AG04450 (cell line): ENCODE measurements at regions of chr4 and their contacts with region 1.

Region 1: DNA sequence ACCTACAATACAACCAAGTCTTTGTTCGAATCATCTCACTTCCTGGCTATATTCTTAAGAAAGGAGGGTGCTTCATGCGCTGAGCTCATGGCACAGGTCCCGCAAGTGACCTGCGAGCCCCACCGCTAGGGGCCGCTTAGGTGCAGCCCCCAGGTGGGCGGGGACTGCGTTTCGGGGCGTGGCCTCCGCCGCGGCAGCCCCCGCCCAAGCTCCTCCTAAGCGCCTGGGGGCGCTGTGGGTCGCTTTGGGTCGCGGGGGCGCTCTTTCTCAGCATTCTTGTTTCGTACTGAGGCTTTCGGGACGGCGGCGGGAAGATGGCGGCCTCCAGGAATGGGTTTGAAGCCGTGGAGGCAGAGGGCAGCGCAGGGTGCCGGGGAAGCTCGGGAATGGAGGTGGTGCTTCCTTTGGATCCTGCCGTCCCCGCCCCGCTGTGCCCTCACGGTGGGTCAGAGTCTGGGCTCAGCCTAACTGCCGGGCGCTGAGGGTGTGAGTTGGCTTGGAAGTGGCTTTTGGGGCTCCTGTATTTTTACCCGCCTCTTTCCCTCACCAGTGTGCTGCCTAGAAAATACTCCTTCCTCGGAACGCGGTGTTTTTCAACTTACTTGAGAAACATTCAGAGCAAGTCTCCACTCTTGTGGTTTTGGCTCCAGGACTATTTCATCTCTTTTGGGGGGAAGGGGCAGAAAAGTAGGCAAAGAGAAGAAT is at the start of gene ZCCHC4:
- DNase-seq: peak; percentile 82
- H3K4me3 ChIP-seq: peak within 1 kb of the TSS; percentile 92
- H3K27ac ChIP-seq: peak within 1 kb of the TSS; percentile 82
- H3K27me3 ChIP-seq: no peaks in the 10 kb centered on the region
- CTCF ChIP-seq: peak; percentile 99
- polyA plus RNA-seq, gene ZCCHC4: 11.4 and 13.1 TPM in 2 replicates

Region 2: GRCh38 chr4:24363751-24364150 is 948.9 kb before region 1 on chr4:
- CTCF ChIA-PET with region 1: no interaction called
- POLR2A ChIA-PET with region 1: no interaction called
- DNase-seq: no peak
- H3K4me3 ChIP-seq: no peak overlapping the region
- H3K27ac ChIP-seq: no peak overlapping the region
- H3K27me3 ChIP-seq: peaks cover 3% of the 10 kb centered on the region
- CTCF ChIP-seq: no peak

Region 3: GRCh38 chr4:25154594-25155265 is 157.9 kb before region 1 on chr4:
- CTCF ChIA-PET with region 1: interaction called, 30 read pairs
- POLR2A ChIA-PET with region 1: no interaction called
- DNase-seq: no peak
- H3K4me3 ChIP-seq: no peak overlapping the region
- H3K27ac ChIP-seq: no peak overlapping the region
- H3K27me3 ChIP-seq: no peaks in the 10 kb centered on the region
- CTCF ChIP-seq: no peak

Region 4: GRCh38 chr4:25180524-25181131 is 132.0 kb before region 1 on chr4:
- CTCF ChIA-PET with region 1: interaction called, 12 read pairs
- POLR2A ChIA-PET with region 1: no interaction called
- DNase-seq: no peak
- H3K4me3 ChIP-seq: no peak overlapping the region
- H3K27ac ChIP-seq: no peak overlapping the region
- H3K27me3 ChIP-seq: no peaks in the 10 kb centered on the region
- CTCF ChIP-seq: peak; percentile 71

Region 5: DNA sequence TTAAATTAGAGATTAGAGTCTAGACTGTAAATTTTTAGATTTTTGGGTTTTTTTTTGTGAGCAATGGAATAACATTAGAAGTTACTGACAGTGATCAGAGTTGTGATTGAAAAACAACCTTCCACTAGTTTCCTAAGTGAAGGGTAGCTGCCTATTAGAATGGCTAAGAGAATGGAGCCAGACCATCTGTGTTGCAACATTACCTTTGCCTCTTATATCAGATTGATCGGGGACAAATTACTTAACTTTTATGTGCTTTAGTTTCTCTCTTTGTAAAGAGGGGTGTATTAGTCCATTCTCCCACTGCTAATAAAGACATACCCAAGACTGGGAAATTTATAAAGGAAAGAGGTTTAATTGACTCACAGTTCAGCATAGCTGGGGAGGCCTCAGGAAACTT is 91.3 kb before region 1 on chr4:
- CTCF ChIA-PET with region 1: no interaction called
- POLR2A ChIA-PET with region 1: no interaction called
- DNase-seq: no peak
- H3K4me3 ChIP-seq: no peak overlapping the region
- H3K27ac ChIP-seq: no peak overlapping the region
- H3K27me3 ChIP-seq: peaks cover 2% of the 10 kb centered on the region
- CTCF ChIP-seq: no peak

Region 6: GRCh38 chr4:25271866-25272265 is 40.8 kb before region 1 on chr4:
- CTCF ChIA-PET with region 1: interaction called, 24 read pairs
- POLR2A ChIA-PET with region 1: no interaction called
- DNase-seq: no peak
- H3K4me3 ChIP-seq: no peak overlapping the region
- H3K27ac ChIP-seq: no peak overlapping the region
- H3K27me3 ChIP-seq: no peaks in the 10 kb centered on the region
- CTCF ChIP-seq: no peak

Region 7: DNA sequence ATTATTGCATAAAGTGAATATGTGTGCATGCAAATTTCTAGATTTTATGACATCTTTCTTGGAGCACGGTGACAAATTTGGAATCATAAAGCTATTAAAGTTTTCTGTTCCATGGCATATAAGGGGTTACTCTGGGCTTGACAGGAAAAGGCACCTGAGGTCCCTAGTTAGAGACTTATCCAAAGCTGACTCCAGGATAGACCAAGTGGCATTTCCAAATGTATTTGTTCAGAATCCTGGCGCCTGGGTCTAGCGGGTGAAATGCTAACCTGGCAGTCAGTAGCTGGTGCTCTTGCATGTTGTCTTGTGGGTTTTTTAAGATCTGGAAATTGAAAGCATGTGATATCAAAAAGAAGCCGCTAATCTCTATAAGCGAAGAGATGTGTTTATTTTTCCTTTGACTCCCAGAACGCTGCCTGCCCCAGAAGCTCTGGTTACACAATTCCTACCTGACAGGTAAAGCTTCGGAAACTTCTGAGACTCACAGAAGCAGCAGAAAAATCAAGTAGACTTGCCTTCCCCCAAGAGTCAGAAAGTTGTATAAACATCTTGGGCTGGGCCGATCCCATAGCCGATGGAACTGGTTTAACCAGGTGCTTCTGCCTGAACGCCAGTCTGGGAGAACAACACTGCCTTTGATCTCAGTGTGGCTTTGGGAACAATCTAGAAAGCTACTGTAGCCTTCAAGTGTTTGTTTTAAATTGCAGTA is 13.0 kb before region 1 on chr4:
- CTCF ChIA-PET with region 1: interaction called, 55 read pairs
- POLR2A ChIA-PET with region 1: no interaction called
- DNase-seq: no peak
- H3K4me3 ChIP-seq: no peak overlapping the region
- H3K27ac ChIP-seq: no peak overlapping the region
- H3K27me3 ChIP-seq: peaks cover 18% of the 10 kb centered on the region
- CTCF ChIP-seq: no peak

Region 8: DNA sequence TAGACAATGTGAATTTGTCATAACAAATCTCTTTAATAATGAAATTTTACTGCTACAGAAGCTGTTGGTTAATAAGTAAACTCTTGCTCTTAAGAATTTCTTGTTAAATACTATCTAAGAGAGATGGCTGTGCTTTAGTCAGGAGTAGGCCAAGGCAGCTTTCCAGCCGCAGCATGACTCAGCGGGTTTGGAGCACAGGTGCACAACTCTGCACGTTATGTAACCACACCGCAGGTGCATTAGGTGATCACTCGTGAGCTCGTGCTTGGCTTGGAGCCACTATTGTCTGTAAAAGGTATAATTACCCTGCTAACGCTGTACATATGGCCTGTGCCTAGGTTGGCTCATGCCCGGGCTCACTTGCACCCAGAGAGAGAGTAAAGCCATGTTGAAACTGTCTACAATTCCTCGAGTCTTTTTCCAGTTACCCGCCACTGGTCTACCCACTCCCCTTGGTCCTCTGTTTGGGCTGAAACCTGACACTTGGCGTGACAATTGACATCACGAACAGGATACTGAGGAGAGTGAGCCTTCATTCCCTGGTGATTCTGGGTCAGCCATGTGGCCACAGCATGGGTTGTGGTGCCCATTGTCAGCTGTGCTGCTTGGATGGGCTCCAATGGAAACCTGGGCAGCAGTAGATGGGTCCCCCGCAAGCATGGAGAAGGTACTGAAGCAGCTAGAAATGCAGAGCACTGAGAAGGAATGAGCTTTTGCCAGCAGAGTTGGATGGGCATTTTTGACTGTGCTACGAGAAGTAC is 46.0 kb after region 1 on chr4:
- CTCF ChIA-PET with region 1: interaction called, 31 read pairs
- POLR2A ChIA-PET with region 1: no interaction called
- DNase-seq: no peak
- H3K4me3 ChIP-seq: no peak overlapping the region
- H3K27ac ChIP-seq: no peak overlapping the region
- H3K27me3 ChIP-seq: no peaks in the 10 kb centered on the region
- CTCF ChIP-seq: no peak

Region 9: DNA sequence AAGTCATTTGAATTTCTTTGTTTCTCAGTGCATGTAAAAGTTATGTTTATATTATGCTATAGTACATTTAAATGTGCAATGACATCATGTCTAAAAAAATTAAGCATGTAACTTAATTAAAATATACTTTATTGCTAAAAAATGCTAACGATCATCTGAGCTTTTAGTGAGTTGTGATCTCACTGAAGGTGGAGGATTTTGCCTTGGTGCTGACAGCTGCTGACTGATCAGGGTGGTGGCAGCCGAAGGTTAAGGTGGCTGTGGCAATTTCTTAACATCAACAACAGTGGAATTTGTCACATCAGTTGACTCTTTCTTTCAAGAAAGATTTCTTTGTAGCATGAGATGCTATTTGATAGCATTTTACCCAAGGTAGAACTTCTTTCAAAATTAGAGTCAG is 71.0 kb after region 1 on chr4:
- CTCF ChIA-PET with region 1: interaction called, 13 read pairs
- POLR2A ChIA-PET with region 1: no interaction called
- DNase-seq: no peak
- H3K4me3 ChIP-seq: no peak overlapping the region
- H3K27ac ChIP-seq: no peak overlapping the region
- H3K27me3 ChIP-seq: no peaks in the 10 kb centered on the region
- CTCF ChIP-seq: no peak

Region 10: GRCh38 chr4:25457053-25457715 is 144.5 kb after region 1 on chr4:
- CTCF ChIA-PET with region 1: no interaction called
- POLR2A ChIA-PET with region 1: no interaction called
- DNase-seq: no peak
- H3K4me3 ChIP-seq: no peak overlapping the region
- H3K27ac ChIP-seq: no peak overlapping the region
- H3K27me3 ChIP-seq: peaks cover 2% of the 10 kb centered on the region
- CTCF ChIP-seq: no peak

Region 11: DNA sequence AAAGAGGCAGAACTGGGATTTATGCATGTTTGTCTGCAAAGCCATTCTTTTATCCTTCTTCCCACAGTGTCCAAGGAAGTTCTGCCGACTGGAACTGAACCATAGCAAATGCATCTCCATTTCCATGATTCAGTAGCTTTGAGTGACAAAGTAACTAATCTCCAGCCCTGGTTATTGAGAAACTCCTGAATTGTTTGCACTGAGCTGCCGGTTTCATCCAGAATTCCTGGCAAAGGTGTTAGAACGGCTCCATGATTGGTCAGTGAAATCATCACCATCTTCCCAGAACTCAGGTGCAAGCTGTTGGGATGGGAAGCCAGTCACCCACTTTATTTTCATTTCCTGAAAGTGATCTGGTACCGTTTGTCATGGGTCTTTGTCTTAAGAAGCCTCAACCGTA is 296.0 kb after region 1 on chr4:
- CTCF ChIA-PET with region 1: no interaction called
- POLR2A ChIA-PET with region 1: no interaction called
- DNase-seq: no peak
- H3K4me3 ChIP-seq: no peak overlapping the region
- H3K27ac ChIP-seq: no peak overlapping the region
- H3K27me3 ChIP-seq: no peaks in the 10 kb centered on the region
- CTCF ChIP-seq: no peak